HCT116 (cell line): ENCODE measurements at regions of chr1 and their contacts with region 1.

Region 1: GRCh38 chr1:206106328-206107167 is 10.6 kb downstream of the AVPR1B start:
- DNase-seq: peak; percentile 56
- ATAC-seq: peak; percentile 98
- H3K4me3 ChIP-seq: no peak overlapping the region
- H3K27ac ChIP-seq: no peak overlapping the region
- H3K4me1 ChIP-seq: no peaks in the 10 kb centered on the region
- H3K27me3 ChIP-seq: no peaks in the 10 kb centered on the region; the same call in 1 of the 2 replicates
- CTCF ChIP-seq: peak; percentile 82 to 95 (median 85)
- POLR2A ChIP-seq: no peak
- RAD21 ChIP-seq: peak; percentile 94

Region 2: GRCh38 chr1:205791568-205792180 is 314.9 kb before region 1 on chr1:
- CTCF ChIA-PET with region 1: interaction called, 7 read pairs
- POLR2A ChIA-PET with region 1: no interaction called
- RAD21 ChIA-PET with region 1: no interaction called
- intact Hi-C with region 1: loop called (anchors 5 kb)
- DNase-seq: no peak
- ATAC-seq: peak; percentile 100
- H3K4me3 ChIP-seq: no peak overlapping the region
- H3K27ac ChIP-seq: no peak overlapping the region
- H3K4me1 ChIP-seq: no peaks in the 10 kb centered on the region
- H3K27me3 ChIP-seq: no peaks in the 10 kb centered on the region
- CTCF ChIP-seq: peak; percentile 78 to 83 (median 78)
- POLR2A ChIP-seq: no peak
- RAD21 ChIP-seq: peak; percentile 91

Region 3: GRCh38 chr1:205919026-205919746 is 187.4 kb before region 1 on chr1:
- CTCF ChIA-PET with region 1: interaction called, 21 read pairs
- POLR2A ChIA-PET with region 1: no interaction called
- RAD21 ChIA-PET with region 1: interaction called in 1 of 2 experiments, 6 read pairs
- intact Hi-C with region 1: loop called (anchors 2 kb)
- DNase-seq: peak; percentile 74
- ATAC-seq: peak; percentile 96
- H3K4me3 ChIP-seq: no peak overlapping the region
- H3K27ac ChIP-seq: no peak overlapping the region
- H3K4me1 ChIP-seq: no peaks in the 10 kb centered on the region
- H3K27me3 ChIP-seq: no peaks in the 10 kb centered on the region
- CTCF ChIP-seq: peak; percentile 86 to 94 (median 89)
- POLR2A ChIP-seq: no peak
- RAD21 ChIP-seq: peak; percentile 98

Region 4: DNA sequence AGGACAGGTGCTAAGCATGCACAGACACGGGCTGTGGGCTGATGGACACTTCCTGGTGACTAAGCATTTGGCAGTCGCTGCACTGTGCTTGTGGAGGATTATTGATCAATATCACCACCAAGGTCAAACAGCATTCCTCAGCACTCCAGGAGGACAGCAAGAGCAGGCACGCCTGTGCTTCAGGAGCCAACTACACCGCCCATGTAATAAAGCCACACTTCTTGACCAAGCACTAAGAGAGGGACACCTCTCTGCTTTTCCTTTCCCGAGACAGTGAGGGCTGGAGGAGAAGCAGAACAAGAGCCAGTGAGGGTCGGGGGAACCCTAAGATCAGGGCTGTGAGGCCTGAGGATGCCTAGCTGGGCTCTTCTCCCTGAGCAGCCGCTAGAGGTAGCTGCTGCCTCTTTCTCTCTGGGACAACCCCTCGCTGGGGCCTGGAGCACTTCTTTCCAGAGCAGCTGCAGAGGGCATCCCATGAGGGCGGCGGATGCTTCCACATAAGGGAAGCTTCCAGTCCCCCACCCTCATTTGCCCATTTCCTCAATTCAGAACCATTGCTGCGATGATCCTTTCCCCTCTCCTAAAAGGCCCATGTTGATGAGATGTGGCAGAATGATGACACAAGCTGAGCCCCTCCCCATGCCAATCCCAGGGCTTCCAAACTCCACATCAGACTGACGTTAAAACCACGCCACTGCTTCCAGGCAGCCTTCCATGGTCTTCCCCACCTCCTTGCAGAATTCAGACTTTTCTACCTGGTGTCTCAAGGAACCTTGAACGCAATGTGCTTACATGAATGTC is 122.4 kb before region 1 on chr1:
- CTCF ChIA-PET with region 1: interaction called, 111 read pairs
- POLR2A ChIA-PET with region 1: interaction called, 5 read pairs
- RAD21 ChIA-PET with region 1: interaction called, 14 to 20 read pairs
- intact Hi-C with region 1: loop called (anchors 1 kb)
- DNase-seq: peak; percentile 44
- ATAC-seq: peak; percentile 97
- H3K4me3 ChIP-seq: no peak overlapping the region
- H3K27ac ChIP-seq: no peak overlapping the region
- H3K4me1 ChIP-seq: peaks cover 3 to 13% of the 10 kb centered on the region in 2 experiments
- H3K27me3 ChIP-seq: no peaks in the 10 kb centered on the region
- CTCF ChIP-seq: peak; percentile 84 to 90 (median 90)
- POLR2A ChIP-seq: no peak
- RAD21 ChIP-seq: peak; percentile 94

Region 5: DNA sequence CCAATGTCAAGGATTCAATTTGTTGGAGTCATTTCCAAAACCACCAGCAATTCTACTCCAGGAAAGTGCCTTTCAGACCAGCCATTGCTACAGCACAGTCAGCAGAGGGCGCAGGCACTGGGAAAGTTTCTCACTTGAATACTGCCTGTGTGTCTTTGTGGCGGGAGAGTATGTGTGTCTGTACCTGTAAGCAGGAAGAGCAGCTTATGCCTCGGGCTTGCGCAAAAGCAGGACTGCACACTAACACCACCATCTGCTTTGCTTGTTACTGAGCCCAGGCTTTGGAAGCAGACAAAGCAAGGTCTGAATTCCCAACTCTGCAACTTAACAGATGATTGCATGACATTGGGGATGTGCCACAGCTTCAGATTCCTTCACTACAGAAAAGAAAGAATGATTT is 75.8 kb before region 1 on chr1:
- CTCF ChIA-PET with region 1: interaction called, 43 read pairs
- POLR2A ChIA-PET with region 1: no interaction called
- RAD21 ChIA-PET with region 1: interaction called, 5 to 9 read pairs
- intact Hi-C with region 1: loop called (anchors 1 kb)
- DNase-seq: peak; percentile 74
- ATAC-seq: peak; percentile 100
- H3K4me3 ChIP-seq: no peak overlapping the region
- H3K27ac ChIP-seq: no peak overlapping the region
- H3K4me1 ChIP-seq: peaks cover 0 to 6% of the 10 kb centered on the region in 2 experiments; a peak in 2 of 4 replicates
- H3K27me3 ChIP-seq: no peaks in the 10 kb centered on the region
- CTCF ChIP-seq: peak; percentile 84 to 97 (median 94)
- POLR2A ChIP-seq: no peak
- RAD21 ChIP-seq: peak; percentile 70

Region 6: GRCh38 chr1:206094024-206094423 is 12.5 kb before region 1 on chr1:
- CTCF ChIA-PET with region 1: interaction called, 21 read pairs
- POLR2A ChIA-PET with region 1: no interaction called
- RAD21 ChIA-PET with region 1: no interaction called
- intact Hi-C with region 1: no loop called
- DNase-seq: no peak
- ATAC-seq: no peak
- H3K4me3 ChIP-seq: no peak overlapping the region
- H3K27ac ChIP-seq: no peak overlapping the region
- H3K4me1 ChIP-seq: no peaks in the 10 kb centered on the region
- H3K27me3 ChIP-seq: no peaks in the 10 kb centered on the region
- CTCF ChIP-seq: no peak
- POLR2A ChIP-seq: no peak
- RAD21 ChIP-seq: no peak